CD8-positive, alpha-beta memory T cell (primary cell): ENCODE measurements at regions of chr1 and their contacts with region 1.

Region 1: GRCh38 chr1:155277070-155277895 is at the start of gene HCN3:
- DNase-seq: peak; percentile 82 to 94 (median 91)
- H3K4me3 ChIP-seq: peak within 1 kb of the TSS; percentile 59
- H3K4me3 Mint-ChIP-seq: peak within 1 kb of the TSS; percentile 68 to 89 (median 80)
- H3K27ac ChIP-seq: peak within 1 kb of the TSS; percentile 7
- H3K27ac Mint-ChIP-seq: peak within 1 kb of the TSS; percentile 56 to 87 (median 64)
- H3K4me1 ChIP-seq: peaks cover 33% of the 10 kb centered on the region
- H3K4me1 Mint-ChIP-seq: peaks cover 33 to 42% (median 37%) of the 10 kb centered on the region in 3 donors
- H3K27me3 ChIP-seq: no peaks in the 10 kb centered on the region
- H3K27me3 Mint-ChIP-seq: no peaks in the 10 kb centered on the region
- total RNA-seq, gene HCN3: 3.2 to 3.7 TPM

Region 2: DNA sequence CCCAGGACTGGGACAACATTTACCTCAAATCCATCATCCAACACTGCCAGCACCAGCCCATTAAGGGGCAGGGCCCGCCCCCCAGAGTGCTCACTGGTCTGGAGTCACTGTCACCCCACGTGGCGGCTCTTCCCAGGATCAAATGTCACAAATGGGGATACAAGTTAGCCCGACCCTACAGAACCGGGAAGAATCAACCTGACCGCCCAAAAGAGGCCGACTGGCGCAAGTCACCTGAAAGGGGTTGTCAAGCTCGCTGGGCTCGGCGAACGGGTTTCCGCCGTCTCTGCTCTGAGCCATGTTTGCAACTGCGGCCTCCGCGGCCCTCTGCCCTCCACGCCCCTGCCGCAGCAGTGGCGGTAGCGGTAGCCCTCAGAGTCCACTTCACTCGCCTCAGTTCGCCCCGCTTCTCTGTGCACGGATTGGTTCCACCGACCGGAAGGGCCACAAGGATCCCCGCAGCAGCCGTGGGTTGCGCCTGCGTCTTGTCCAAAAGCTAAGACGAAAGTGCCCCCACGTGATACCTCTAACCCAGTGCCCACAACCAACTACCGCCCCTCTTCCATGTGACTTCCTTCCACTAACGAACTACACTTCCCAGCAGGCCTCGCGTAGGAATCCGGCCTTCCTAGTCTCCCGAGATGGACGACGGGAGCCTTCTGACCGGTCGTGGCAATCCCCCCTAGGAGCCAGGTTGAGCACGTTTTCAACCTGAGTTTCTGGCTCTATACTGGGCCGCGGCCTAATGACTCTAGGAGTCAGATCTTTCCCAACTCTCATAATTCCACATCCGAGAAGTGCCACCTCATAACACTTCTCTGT is 15.2 kb before region 1 on chr1 and contains the start of gene SCAMP3:
- CTCF ChIA-PET with region 1: interaction called, 10 read pairs
- POLR2A ChIA-PET with region 1: interaction called, 25 read pairs
- DNase-seq: peak; percentile 82 to 91 (median 84)
- H3K4me3 ChIP-seq: peak within 1 kb of the TSS; percentile 99
- H3K4me3 Mint-ChIP-seq: peak within 1 kb of the TSS; percentile 95 to 100 (median 99)
- H3K27ac ChIP-seq: peak within 1 kb of the TSS; percentile 82
- H3K27ac Mint-ChIP-seq: peak within 1 kb of the TSS; percentile 80 to 99 (median 98)
- H3K4me1 ChIP-seq: peaks cover 22% of the 10 kb centered on the region
- H3K4me1 Mint-ChIP-seq: peaks cover 31 to 45% (median 36%) of the 10 kb centered on the region in 3 donors
- H3K27me3 ChIP-seq: no peaks in the 10 kb centered on the region
- H3K27me3 Mint-ChIP-seq: no peaks in the 10 kb centered on the region
- total RNA-seq, gene SCAMP3: 152 to 158 TPM

Region 3: DNA sequence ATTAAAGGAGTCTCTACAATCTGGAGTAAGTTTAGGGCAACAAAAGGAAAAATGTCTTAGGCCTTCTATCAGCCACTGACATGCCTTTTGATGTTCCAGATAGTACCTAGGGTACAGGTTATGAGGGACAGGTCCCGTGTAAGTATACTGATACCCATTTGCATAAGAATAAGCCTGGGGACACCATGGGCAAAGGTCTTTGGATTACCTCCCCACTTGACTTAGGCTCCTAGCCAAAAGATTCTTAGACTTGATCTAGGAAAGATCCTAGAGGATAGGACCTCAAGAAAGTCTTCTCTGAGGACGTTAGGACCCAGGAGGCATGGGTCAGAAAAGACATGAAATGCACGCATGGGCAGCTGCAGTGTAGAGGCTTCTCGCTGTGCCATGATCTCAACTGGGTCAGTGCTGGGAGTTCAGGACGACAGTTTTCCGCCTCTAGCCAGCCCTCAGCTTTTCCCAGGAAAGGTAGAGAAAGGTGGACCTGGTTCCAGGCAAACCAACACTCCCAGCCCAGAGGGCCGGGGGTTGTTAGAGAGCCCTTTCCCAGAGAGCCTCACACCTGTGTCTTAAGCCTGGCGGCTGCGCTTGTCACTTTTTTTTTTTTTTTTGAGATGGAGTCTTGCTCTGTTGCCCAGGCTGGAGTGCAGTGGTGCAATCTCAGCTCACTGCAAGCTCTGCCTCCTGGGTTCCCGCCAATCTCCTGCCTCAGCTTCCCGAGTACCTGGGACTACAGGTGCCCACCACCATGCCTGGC is 359.3 kb after region 1 on chr1:
- CTCF ChIA-PET with region 1: no interaction called
- POLR2A ChIA-PET with region 1: no interaction called
- DNase-seq: no peak
- H3K4me3 ChIP-seq: peak overlapping the region; percentile 91
- H3K4me3 Mint-ChIP-seq: peak overlapping the region; percentile 91 to 99 (median 97)
- H3K27ac ChIP-seq: no peak overlapping the region
- H3K27ac Mint-ChIP-seq: peak overlapping the region; percentile 93 to 99 (median 97)
- H3K4me1 ChIP-seq: peaks cover 19% of the 10 kb centered on the region
- H3K4me1 Mint-ChIP-seq: peaks cover 14 to 27% (median 21%) of the 10 kb centered on the region in 3 donors
- H3K27me3 ChIP-seq: no peaks in the 10 kb centered on the region
- H3K27me3 Mint-ChIP-seq: peaks cover 2 to 4% of the 10 kb centered on the region in 2 donors